Activated naive CD4-positive, alpha-beta T cell treated with anti-CD3 and anti-CD28 coated beads, Interleukin-2, amount 10 ng/mL, durations not matched to agents 7 days and 5 days (primary cell): ENCODE measurements at regions of chr2 and their contacts with region 1.

Region 1: DNA sequence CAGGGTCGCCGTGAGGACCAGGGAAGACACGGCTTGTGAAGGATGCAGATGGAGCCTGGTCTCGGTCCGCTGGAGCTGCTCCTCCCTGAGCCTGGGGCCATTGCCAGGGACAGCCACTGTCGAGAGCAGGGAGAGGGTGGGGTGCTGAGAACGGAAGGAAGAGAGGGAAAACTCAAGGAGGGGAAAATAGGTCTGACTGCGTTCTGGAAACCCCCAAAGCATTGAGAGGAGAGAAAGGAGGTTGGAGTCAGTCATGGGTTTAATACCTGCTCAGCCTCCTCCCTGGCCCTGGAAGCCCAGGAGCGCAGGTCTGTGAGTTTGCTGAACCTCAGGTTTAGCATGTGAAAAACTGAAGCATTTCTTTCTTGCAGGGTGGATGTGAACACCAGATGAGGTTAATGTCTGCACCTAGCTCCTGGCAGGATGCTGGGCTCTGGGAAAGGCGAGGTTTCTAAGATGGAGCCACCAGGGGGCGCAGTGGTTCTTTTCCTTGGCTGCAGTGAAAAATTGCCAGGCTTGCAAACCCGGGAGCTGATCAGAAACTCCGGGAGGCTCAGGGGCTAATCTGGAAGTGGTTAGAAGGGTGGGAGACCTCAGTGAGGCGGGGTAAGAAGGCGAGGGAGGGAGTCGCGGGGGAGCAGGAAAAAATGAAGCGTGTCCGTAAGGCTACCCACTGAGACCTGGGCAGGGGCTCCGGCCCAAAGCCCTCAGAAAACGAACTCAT is 33.6 kb upstream of the RNF149 start:
- DNase-seq: peak; percentile 83
- H3K4me3 Mint-ChIP-seq: no peak overlapping the region
- H3K27ac Mint-ChIP-seq: peak overlapping the region; percentile 44
- H3K4me1 Mint-ChIP-seq: peaks cover 51% of the 10 kb centered on the region
- H3K27me3 Mint-ChIP-seq: peaks cover 8% of the 10 kb centered on the region

Region 2: DNA sequence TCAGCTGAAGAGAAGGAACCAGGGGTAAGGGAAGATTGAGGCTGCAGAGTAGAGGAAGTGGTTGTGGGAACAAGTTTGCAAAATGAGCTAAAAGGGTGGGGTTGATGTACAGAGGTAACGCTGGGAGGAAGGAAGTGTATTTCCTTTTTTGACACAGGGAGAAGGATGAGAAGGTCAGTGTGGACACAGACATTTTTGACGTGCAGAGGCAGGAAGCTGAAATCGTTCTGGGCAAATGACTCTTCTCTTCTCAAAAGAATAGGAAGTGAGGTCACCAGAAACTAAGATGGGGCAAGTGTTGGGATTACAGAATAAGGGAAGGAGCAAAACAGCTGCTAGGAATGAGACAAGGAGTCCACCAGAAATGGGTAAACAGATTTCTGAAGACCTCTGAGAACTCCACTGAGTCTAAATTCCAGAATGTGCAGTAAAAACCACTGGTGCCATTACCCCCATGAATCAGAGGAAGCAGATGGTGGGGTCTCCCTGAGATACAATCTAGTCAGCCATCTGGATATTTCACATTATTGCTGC is 13.5 kb before region 1 on chr2:
- CTCF ChIA-PET with region 1: interaction called, 32 read pairs
- DNase-seq: peak; percentile 59
- H3K4me3 Mint-ChIP-seq: no peak overlapping the region
- H3K27ac Mint-ChIP-seq: no peak overlapping the region
- H3K4me1 Mint-ChIP-seq: peaks cover 18% of the 10 kb centered on the region
- H3K27me3 Mint-ChIP-seq: no peaks in the 10 kb centered on the region

Region 3: DNA sequence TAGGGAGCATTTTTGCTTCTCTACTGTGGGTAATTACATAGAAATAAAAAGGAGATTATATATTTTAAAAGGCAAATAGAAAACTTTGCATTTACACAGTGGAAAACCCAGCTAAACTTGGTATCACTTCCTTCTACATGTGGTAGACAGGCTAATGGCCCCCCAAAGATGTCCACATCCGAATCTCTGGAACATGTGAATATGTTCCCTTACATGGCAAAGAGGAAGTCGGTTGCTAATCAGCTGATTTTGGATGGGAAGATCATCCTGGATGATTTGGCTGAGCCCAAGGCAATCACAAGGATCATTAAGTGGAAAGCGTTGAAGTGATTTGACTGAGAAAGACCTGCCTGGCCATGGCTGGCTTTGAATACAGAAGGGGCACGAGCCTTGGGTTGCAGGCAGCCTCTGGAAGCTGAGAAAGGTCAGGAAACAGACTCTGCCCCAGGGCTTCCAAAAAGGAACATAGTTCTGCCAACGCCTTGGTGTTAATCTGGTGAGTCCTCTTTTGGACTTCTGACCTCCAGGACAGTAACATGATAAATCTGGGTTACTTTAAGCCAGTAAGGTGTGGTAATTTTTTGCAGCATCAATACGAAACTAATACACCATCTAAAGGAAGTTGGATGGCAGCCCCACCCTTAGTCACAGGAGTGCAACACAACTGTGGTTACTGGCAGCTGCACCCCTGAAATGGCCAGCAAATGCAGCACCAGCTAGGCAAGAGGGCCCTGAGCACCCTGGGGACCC is 19.2 kb after region 1 on chr2:
- CTCF ChIA-PET with region 1: interaction called, 14 read pairs
- DNase-seq: peak; percentile 70
- H3K4me3 Mint-ChIP-seq: peak overlapping the region; percentile 19
- H3K27ac Mint-ChIP-seq: peak overlapping the region; percentile 88
- H3K4me1 Mint-ChIP-seq: peaks cover 48% of the 10 kb centered on the region
- H3K27me3 Mint-ChIP-seq: peaks cover 11% of the 10 kb centered on the region

Region 4: DNA sequence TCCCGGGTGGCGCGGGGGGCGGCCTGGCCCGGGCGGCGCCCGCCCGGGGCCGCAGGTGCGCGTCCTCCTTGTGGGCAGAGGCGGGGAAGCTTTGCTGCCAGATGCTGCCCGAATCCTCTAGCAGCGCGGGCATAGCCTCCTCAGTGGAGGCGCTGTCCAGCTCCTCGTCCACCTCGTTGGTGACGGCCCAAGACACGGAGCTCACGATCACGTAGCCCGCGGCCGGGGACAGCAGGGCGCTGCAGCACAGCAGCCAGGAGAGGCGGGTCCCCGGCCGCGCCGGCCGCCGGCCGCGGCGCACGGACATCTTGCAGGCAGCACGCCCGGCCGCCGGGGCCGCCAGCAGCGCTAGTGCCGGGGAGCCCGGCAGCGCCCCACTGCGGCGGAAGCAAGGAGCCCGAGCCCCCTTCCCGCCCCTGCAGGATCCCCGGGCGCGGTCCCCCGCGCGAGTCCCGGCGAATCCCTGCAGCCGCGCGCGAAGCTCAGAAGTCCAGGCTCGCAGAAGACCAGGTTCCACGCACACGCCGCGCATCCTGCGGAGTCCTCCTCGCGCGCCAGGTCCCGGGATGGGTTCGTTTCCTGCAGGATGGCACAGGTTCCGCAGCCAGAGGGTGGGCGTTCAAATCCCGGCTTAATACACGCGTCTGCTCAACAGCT is 45.2 kb after region 1 on chr2 and contains the start of gene CREG2:
- CTCF ChIA-PET with region 1: interaction called, 30 read pairs
- DNase-seq: peak; percentile 77
- H3K4me3 Mint-ChIP-seq: peak within 1 kb of the TSS; percentile 65
- H3K27ac Mint-ChIP-seq: no peak within 1 kb of the TSS
- H3K4me1 Mint-ChIP-seq: peaks cover 10% of the 10 kb centered on the region
- H3K27me3 Mint-ChIP-seq: peaks cover 81% of the 10 kb centered on the region

Region 5: GRCh38 chr2:101419096-101419663 is 77.1 kb after region 1 on chr2:
- CTCF ChIA-PET with region 1: interaction called, 21 read pairs
- DNase-seq: peak; percentile 75
- H3K4me3 Mint-ChIP-seq: no peak overlapping the region
- H3K27ac Mint-ChIP-seq: no peak overlapping the region
- H3K4me1 Mint-ChIP-seq: no peaks in the 10 kb centered on the region
- H3K27me3 Mint-ChIP-seq: peaks cover 16% of the 10 kb centered on the region

Region 6: DNA sequence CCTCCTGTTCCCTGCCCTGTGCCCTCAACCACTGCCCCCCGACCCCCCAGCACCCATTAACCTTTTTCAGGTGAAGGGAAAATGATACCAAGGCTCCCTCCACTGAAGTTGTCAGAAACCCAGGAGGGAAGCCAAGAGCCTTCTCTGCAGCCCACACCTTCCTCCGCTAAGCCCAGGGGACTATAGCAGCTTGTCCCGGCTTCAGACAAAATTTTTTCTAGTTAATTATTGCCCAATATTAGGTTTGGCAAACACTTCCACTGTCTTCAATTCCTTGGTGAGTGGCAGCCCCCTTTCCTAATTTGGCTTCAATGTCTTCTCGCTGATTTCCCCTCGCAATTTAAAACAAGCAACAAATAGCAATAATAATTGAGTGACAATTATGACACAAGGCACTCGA is 108.9 kb after region 1 on chr2:
- CTCF ChIA-PET with region 1: no interaction called
- DNase-seq: no peak
- H3K4me3 Mint-ChIP-seq: no peak overlapping the region
- H3K27ac Mint-ChIP-seq: no peak overlapping the region
- H3K4me1 Mint-ChIP-seq: no peaks in the 10 kb centered on the region
- H3K27me3 Mint-ChIP-seq: peaks cover 4% of the 10 kb centered on the region